Activated T-helper 1 cell treated with anti-CD3 and anti-CD28 coated beads, Interleukin-12 subunit alpha, Interleukin-12 subunit beta, Interleukin-2, Interleukin-4 antibody, amounts not matched to agents 30 ng/mL and 10 ng/mL and 1 ng/mL, durations not matched to agents 14 hours and 24 hours and 36 hours (primary cell): ENCODE measurements at regions of chr9 and their contacts with region 1.

Region 1: DNA sequence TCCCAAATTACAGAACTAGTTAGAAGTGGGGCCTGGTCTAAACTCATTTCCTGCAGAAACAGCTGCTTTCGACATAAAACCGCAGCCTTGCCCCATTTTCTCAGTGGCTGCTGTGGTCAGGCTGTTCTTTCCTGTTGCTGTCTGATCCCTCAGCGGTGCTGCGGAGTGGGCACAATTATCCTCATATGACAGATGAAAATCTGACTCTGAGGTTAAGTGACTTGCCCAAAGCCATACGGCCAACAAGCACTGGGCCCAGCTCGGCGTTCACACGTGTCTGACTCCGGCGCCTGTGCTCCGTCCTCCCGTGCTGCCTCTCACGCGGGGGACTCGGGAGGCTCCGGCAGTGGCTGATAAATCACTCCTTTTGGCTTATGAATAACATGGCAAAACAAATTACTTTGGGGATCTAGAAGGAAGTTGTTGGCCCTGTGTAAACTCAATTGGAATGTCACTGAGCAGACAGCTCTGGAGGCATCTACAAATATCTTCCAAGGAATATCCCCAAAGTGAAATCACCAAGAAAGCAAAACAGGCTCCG is 142.6 kb upstream of the LMX1B start:
- DNase-seq: peak; percentile 81
- H3K4me3 Mint-ChIP-seq: peak overlapping the region; percentile 58
- H3K27ac Mint-ChIP-seq: peak overlapping the region; percentile 89
- H3K4me1 Mint-ChIP-seq: peaks cover 47% of the 10 kb centered on the region
- H3K27me3 Mint-ChIP-seq: peaks cover 50% of the 10 kb centered on the region

Region 2: DNA sequence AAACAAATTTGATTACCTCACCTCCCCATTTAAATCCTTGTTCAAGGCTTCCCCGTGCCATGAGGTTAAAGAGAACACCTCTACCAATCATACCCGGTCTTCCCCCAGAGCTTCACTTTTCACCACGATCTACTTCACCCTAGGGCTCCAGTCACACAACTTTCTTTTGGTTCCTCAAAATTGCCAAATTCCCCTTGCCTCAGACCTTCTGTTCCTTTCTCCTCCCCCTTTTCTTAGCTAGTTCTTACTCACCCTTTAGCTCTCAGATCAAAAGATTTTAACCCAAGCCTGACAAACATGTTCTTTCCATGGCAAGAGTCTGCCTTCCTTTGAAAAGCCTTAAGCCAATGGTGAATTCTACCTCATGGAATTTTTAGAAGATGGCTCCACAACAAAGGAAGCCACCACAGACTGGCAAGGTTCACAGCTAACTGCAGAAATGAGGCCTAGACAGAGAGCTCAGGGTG is 820.9 kb before region 1 on chr9:
- intact Hi-C with region 1: loop called (anchors 5 kb)
- DNase-seq: no peak
- H3K4me3 Mint-ChIP-seq: peak overlapping the region; percentile 54
- H3K27ac Mint-ChIP-seq: peak overlapping the region; percentile 85
- H3K4me1 Mint-ChIP-seq: peaks cover 71% of the 10 kb centered on the region
- H3K27me3 Mint-ChIP-seq: no peaks in the 10 kb centered on the region

Region 3: DNA sequence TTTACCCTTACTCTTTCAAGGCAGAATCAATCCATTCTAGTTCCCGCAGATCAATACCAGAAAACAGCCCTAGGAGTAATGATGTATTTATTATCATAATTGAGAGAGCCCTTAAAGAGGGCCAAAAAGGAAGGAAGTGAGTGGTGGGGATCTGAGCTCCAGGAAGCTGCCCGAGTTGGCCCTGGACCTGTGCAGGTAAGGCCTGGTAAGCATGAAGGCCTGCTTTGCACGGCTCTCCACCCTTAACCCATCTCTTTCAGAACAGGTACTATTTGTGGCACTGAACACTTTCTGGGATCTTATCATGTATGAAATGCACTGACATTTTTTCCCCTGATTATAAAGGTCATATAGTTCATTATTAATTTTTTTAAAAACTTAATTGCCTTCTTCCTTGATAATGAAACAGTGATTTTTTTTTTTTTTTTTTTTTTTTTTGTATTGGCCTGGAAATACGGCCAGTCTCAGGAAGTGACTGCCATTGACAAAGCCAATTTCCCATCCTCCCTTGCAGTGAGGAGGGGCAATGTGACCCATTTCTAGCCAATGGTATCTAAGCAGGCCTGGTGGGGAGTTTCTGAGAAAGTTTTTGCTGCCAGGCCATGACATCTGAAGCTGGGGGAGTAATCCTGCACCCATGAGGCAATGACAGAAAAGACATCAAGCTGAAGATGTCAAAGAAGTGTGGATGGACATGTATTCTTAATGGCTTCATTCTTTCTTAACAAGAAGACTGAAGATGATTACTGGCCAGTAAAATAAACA is 150.8 kb before region 1 on chr9:
- intact Hi-C with region 1: loop called (anchors 5 kb)
- DNase-seq: no peak
- H3K4me3 Mint-ChIP-seq: no peak overlapping the region
- H3K27ac Mint-ChIP-seq: no peak overlapping the region
- H3K4me1 Mint-ChIP-seq: no peaks in the 10 kb centered on the region
- H3K27me3 Mint-ChIP-seq: peaks cover 7% of the 10 kb centered on the region

Region 4: GRCh38 chr9:126411225-126411947 is 59.8 kb before region 1 on chr9:
- intact Hi-C with region 1: loop called (anchors 1 kb)
- DNase-seq: peak; percentile 50
- H3K4me3 Mint-ChIP-seq: peak overlapping the region; percentile 71
- H3K27ac Mint-ChIP-seq: peak overlapping the region; percentile 37
- H3K4me1 Mint-ChIP-seq: peaks cover 29% of the 10 kb centered on the region
- H3K27me3 Mint-ChIP-seq: peaks cover 6% of the 10 kb centered on the region

Region 5: DNA sequence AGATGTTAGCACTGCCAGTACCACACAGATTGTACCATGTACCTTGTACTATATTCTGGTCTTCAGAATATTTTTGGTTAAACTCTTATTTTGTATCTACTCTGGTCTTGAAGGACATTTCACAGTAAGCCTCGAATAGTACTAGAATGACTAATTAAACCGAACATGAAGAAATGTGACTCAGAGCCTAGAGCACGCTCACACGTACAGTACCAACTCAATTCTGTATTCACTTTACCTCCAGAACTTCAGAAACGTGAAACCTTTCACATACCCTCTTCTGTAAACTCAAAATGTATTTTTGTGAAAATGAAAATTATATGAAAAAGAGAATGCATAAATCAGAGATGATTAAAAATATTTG is 31.8 kb before region 1 on chr9:
- intact Hi-C with region 1: loop called (anchors 2 kb)
- DNase-seq: no peak
- H3K4me3 Mint-ChIP-seq: no peak overlapping the region
- H3K27ac Mint-ChIP-seq: no peak overlapping the region
- H3K4me1 Mint-ChIP-seq: peaks cover 5% of the 10 kb centered on the region
- H3K27me3 Mint-ChIP-seq: peaks cover 11% of the 10 kb centered on the region

Region 6: DNA sequence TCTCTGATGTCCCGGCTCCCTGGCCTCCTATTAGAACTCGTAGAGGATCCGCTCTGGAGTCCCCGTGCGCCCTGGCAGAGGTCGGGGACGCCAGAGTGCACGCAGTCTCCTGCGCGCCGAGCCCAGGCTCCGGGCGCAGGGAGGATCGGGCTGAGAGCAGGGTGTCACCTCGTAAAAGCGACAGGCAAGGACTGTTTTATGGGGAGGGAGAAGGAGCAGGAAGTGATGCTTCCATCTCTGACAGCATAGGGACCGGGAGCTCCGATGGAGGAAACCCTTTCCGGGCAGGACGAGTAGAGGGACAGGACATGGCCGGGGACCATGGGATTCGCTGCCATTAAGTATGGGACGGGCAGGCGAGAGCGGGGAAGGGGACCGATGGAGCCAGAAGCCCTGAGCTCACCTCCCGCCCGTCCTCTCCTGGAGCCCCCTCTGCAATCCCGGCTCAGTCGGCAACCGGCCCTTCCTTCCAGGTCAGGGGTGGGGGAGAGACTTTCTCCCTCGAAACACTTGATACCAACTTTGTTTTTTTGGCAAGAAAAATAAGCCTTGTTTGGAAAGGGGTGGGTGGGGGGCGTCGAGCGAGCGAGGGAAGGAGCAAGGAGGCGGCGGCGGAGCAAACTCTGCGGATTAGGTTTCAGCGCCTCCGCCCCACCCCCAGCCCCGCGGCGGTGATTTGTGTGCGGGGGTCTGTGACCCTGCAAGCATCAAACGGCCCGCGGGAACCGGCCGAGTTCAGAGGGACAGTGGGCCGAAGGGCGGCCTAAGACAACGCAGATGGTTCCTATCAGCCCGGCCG is 155.2 kb after region 1 on chr9:
- intact Hi-C with region 1: no loop called
- DNase-seq: no peak
- H3K4me3 Mint-ChIP-seq: peak overlapping the region; percentile 68
- H3K27ac Mint-ChIP-seq: no peak overlapping the region
- H3K4me1 Mint-ChIP-seq: no peaks in the 10 kb centered on the region
- H3K27me3 Mint-ChIP-seq: peaks cover 77% of the 10 kb centered on the region

Region 7: DNA sequence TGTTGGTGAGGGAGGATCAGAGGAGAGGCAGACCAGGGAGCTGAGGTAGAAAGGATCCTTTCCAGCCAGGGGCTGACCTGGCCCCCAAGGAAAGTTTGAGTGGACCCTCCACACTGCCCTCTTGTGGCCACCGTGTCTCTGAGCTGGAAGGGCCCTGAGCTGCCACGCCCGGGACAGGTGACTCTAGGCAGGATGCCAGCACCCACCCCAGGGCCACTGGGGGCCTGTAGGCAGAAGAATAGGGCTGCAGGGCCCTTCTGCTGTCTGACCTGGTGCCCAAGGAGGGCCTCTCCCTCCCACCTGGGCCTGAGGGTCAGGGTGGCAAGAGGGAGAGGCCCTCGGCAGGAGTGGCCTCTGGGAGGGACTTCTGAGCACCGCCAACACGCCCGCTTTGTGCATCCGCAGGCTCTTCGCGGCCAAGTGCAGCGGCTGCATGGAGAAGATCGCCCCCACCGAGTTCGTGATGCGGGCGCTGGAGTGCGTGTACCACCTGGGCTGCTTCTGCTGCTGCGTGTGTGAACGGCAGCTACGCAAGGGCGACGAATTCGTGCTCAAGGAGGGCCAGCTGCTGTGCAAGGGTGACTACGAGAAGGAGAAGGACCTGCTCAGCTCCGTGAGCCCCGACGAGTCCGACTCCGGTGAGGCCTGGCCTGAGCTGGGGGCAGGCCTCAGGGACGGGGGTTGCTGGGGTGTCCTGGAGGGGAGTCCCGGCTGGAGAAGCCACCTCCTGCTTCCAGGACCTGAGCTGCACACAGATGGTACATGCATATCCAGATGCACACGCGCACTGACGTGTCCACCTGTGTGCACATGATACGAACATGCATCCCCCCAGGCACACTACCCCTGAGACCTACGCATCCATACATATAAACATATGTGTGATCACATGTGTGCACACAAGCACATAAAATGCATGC is 219.5 kb after region 1 on chr9:
- intact Hi-C with region 1: no loop called
- DNase-seq: peak; percentile 26
- H3K4me3 Mint-ChIP-seq: no peak overlapping the region
- H3K27ac Mint-ChIP-seq: no peak overlapping the region
- H3K4me1 Mint-ChIP-seq: no peaks in the 10 kb centered on the region
- H3K27me3 Mint-ChIP-seq: peaks cover 10% of the 10 kb centered on the region